ENCODE measurements at regions of chr1 and their contacts with region 1.

Region 1: DNA sequence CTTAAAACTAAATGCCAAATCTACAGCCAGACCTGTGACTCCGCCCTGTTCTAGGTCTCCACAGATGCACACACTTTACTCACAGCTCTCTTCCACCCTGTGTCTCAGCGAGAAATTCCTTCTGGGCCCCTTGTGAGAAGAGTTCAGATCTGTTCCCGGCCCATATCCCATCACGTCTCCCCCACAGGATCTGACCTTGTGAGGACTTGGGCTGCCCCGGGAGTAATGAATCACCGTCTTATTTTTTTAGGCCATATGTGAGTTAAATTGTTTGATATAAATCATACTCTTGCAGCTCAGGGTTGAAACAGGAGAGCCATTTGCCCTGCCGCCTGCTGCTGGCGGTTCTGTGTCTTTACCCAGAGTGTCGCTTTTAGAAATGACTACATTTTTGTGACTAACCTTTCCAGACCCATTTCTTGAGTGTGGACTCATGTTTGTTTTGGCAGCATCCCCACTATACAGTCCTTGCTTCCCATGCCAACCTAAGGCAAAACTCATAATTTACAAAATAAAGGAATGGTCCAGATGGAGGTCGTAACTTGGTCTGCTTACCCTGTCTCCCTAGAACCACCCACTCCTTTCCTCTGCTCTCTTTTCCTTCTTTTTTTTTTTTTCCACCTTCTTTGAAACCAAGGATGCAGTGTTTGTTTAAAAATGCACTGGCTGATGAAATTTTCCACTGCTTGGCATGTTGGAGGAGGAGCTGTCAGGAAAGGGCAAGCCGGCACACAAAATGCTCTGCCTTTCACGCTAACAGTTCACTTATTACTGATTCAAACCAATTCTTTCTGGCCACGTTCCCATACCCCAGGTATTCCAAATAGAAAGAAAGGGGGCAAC is 98.0 kb upstream of the C1orf105 start:
- DNase-seq: peak; percentile 59 to 92
- ATAC-seq: peak; percentile 93 to 95
- H3K4me3 ChIP-seq: peak overlapping the region; percentile 39
- H3K27ac ChIP-seq: peak overlapping the region; percentile 91 to 95
- H3K4me1 ChIP-seq: peaks cover 55% of the 10 kb centered on the region
- CTCF ChIP-seq: no peak
- EP300 ChIP-seq: peak; percentile 61 to 70; a peak in 2 of 5 replicates
- POLR2A ChIP-seq: no peak
- RAD21 ChIP-seq: peak; percentile 20 to 60

Region 2: GRCh38 chr1:172269644-172270043 is 52.8 kb before region 1 on chr1:
- CTCF ChIA-PET with region 1: no interaction called
- POLR2A ChIA-PET with region 1: interaction called, 10 read pairs
- DNase-seq: peak in 1 of 2 experiments; percentile 50
- ATAC-seq: peak; percentile 85 to 86
- H3K4me3 ChIP-seq: no peak overlapping the region
- H3K27ac ChIP-seq: peak overlapping the region; percentile 70 to 86
- H3K4me1 ChIP-seq: peaks cover 59% of the 10 kb centered on the region
- CTCF ChIP-seq: no peak
- EP300 ChIP-seq: no peak
- POLR2A ChIP-seq: no peak
- RAD21 ChIP-seq: peak in 1 of 2 experiments; percentile 43; a peak in 2 of 5 replicates

Region 3: DNA sequence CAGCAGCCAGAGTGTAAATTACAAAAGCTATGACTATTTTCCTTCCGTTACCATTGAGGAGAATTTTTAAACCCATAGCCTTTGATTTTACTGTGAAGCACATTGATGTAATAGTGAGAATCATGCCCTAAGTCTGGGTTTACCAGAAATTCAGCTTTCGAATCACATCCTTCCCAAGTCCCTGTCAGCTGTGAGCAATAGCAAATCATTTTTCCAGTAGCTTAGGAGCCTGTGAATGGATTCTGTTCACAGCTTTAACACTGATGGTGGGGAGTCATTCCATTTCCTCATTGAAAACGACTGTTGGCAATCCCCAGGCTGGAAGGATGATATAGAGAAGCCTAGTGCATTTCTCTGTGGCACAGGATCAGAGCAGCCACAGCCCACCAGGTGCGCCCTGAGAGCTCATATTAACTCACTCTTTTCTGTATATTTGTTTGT is 15.9 kb after region 1 on chr1:
- CTCF ChIA-PET with region 1: interaction called, 11 read pairs
- POLR2A ChIA-PET with region 1: interaction called, 7 read pairs
- DNase-seq: no peak
- ATAC-seq: no peak
- H3K4me3 ChIP-seq: no peak overlapping the region
- H3K27ac ChIP-seq: 0 out of 6 replicates have a peak overlapping the region, but pooled peaks of 1 of the 2 experiments have one; percentile 43
- H3K4me1 ChIP-seq: peaks cover 6% of the 10 kb centered on the region
- CTCF ChIP-seq: no peak
- EP300 ChIP-seq: no peak
- POLR2A ChIP-seq: no peak
- RAD21 ChIP-seq: no peak

Region 4: GRCh38 chr1:172398970-172399755 is 76.7 kb after region 1 on chr1:
- CTCF ChIA-PET with region 1: interaction called, 9 read pairs
- POLR2A ChIA-PET with region 1: interaction called, 10 read pairs
- DNase-seq: peak; percentile 78 to 90
- ATAC-seq: peak; percentile 90 to 95
- H3K4me3 ChIP-seq: no peak overlapping the region; the same call in 2 of the 3 replicates
- H3K27ac ChIP-seq: peak overlapping the region; percentile 83 to 86
- H3K4me1 ChIP-seq: peaks cover 28% of the 10 kb centered on the region
- CTCF ChIP-seq: peak; percentile 92
- EP300 ChIP-seq: peak; percentile 13 to 14; a peak in 1 of 5 replicates
- POLR2A ChIP-seq: no peak
- RAD21 ChIP-seq: peak; percentile 93 to 99

Measured in A549 (cell line).